ENCODE measurements at regions of chr20 and their contacts with region 1.

Region 1: GRCh38 chr20:23680146-23680545 is 8.7 kb downstream of the CST4 start:
- DNase-seq: no peak
- ATAC-seq: no peak
- H3K4me3 ChIP-seq: no peak overlapping the region
- H3K27ac ChIP-seq: no peak overlapping the region
- H3K4me1 ChIP-seq: no peaks in the 10 kb centered on the region
- H3K27me3 ChIP-seq: no peaks in the 10 kb centered on the region
- CTCF ChIP-seq: no peak
- POLR2A ChIP-seq: no peak

Region 2: DNA sequence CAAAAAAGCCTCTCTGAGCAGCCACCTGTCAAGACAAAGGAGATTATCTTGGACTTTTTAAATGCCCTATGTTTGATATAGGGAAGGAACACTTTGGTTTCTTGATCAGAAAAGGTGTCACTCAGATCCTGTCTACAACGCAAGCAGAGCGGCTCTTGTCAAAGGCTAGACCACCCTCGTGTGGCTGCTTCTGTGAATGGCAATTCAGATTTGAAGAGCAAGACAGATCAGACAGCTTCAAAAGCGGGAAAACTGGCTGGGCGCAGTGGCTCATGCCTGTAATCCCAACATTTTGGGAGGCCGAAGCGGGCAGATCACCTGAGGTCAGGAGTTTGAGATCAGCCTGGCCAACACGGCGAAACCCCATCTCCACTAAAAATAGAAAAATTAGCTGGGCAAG is 339.6 kb before region 1 on chr20:
- in situ Hi-C with region 1: no loop called
- intact Hi-C with region 1: no loop called
- DNase-seq: peak; percentile 39 to 63
- ATAC-seq: peak; percentile 84 to 87
- H3K4me3 ChIP-seq: no peak overlapping the region
- H3K27ac ChIP-seq: no peak overlapping the region
- H3K4me1 ChIP-seq: peaks cover 6% of the 10 kb centered on the region in 2 donors
- H3K27me3 ChIP-seq: no peaks in the 10 kb centered on the region
- CTCF ChIP-seq: peak; percentile 33 to 75 (median 74)
- POLR2A ChIP-seq: no peak

Region 3: DNA sequence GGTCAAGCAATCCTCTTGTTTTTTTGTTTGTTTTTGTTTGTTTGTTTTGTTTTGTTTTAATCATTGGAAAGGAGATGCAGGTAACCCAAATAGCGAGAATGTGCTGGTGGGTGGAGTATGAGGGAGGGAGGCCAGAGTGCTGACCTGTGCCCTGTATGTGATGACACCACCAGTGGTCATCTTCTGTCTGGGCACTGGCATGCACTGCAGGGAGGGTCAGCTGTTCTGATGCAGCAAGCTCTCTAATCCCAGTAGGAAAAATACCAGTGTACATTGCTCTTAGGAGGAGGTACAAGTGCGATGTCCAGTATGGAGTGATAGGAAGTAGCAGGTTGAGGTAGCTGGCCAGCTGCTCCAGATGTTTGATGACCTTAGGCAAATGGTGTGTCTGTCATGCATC is 73.4 kb after region 1 on chr20:
- in situ Hi-C with region 1: no loop called
- intact Hi-C with region 1: no loop called
- DNase-seq: no peak
- ATAC-seq: no peak
- H3K4me3 ChIP-seq: no peak overlapping the region
- H3K27ac ChIP-seq: no peak overlapping the region
- H3K4me1 ChIP-seq: no peaks in the 10 kb centered on the region
- H3K27me3 ChIP-seq: no peaks in the 10 kb centered on the region
- CTCF ChIP-seq: no peak
- POLR2A ChIP-seq: no peak

Region 4: DNA sequence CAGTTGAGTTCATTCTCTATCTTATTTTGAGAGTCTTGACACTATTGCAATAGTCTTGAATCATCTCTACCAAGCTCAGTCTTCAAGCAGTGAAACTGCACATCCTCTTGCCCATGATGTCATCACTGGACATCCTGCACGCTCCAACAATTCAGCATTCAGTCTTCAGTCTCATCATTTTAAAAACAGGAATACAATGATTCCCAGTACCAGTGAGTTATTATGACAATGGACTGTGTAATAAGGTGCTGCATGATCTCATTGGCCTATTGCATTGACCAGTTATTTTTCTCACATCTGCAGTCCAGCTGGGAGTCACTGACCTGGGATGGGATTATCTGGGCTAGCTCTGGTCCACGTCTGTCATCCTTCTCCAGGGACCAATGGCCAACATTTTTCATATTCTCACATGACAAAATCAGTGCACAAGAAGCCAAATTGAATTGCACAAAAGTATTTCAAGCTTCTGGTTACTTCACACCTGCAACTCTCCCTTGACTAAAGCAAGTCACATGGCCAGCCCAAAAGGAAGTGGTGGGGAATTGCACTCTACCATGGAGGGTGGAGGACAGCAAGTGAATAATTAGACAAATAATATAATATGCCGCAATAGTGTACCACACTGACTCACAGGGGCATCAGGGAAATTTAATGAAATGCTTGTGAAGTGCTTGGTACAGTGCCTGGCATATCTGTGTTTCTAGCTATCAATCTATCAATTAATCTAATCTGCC is 152.8 kb after region 1 on chr20:
- in situ Hi-C with region 1: no loop called
- intact Hi-C with region 1: no loop called
- DNase-seq: no peak
- ATAC-seq: no peak
- H3K4me3 ChIP-seq: no peak overlapping the region
- H3K27ac ChIP-seq: no peak overlapping the region
- H3K4me1 ChIP-seq: no peaks in the 10 kb centered on the region
- H3K27me3 ChIP-seq: no peaks in the 10 kb centered on the region
- CTCF ChIP-seq: no peak
- POLR2A ChIP-seq: no peak

Region 5: GRCh38 chr20:23970049-23970448 is 289.9 kb after region 1 on chr20:
- in situ Hi-C with region 1: loop called in 1 of 4 experiments (anchors 25 kb)
- intact Hi-C with region 1: no loop called
- DNase-seq: no peak
- ATAC-seq: no peak
- H3K4me3 ChIP-seq: no peak overlapping the region
- H3K27ac ChIP-seq: no peak overlapping the region
- H3K4me1 ChIP-seq: no peaks in the 10 kb centered on the region
- H3K27me3 ChIP-seq: no peaks in the 10 kb centered on the region
- CTCF ChIP-seq: no peak
- POLR2A ChIP-seq: no peak

Region 6: DNA sequence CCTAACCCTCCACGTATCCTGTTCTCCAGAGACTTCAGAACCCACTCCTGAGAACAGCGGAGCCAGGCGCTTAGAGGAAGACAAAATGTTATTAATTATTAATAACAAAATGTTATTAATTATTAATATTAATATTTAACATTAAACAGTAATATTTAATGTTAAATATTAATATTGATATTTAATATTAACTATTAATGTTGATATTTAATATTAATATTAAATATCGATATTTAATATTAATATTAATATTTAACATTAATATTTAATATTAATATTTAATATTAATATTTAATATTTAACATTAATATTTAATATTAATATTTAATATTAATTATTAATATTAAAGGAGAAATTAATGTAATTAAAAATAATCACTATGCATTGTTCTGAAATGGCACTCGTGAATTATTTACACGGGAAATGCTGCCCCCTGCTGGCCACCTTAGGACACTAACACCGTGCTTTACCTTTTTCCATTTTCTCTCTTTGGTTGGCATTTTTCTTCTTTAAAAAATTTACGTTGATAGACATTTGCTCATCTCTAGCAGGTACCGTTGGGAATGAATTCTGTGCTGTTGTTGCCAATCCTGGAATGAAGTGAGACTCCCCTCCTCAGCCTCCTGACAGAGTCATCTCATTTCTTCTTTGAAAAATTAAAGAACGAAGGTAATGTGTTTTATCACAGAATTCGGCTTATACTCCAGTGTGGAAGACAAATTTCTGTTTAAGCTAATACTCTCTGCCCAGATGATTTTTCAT is 315.9 kb after region 1 on chr20:
- in situ Hi-C with region 1: loop called in 2 of 4 experiments (anchors 10 kb)
- intact Hi-C with region 1: no loop called
- DNase-seq: no peak
- ATAC-seq: no peak
- H3K4me3 ChIP-seq: no peak overlapping the region
- H3K27ac ChIP-seq: no peak overlapping the region
- H3K4me1 ChIP-seq: no peaks in the 10 kb centered on the region
- H3K27me3 ChIP-seq: peaks cover 0 to 6% (median 0%) of the 10 kb centered on the region in 3 donors
- CTCF ChIP-seq: peak; percentile 40 to 84 (median 67)
- POLR2A ChIP-seq: no peak

Region 7: GRCh38 chr20:24001712-24002405 is 321.7 kb after region 1 on chr20:
- in situ Hi-C with region 1: loop called in 2 of 4 experiments (anchors 10 kb)
- intact Hi-C with region 1: no loop called
- DNase-seq: no peak
- ATAC-seq: no peak
- H3K4me3 ChIP-seq: no peak overlapping the region
- H3K27ac ChIP-seq: no peak overlapping the region
- H3K4me1 ChIP-seq: no peaks in the 10 kb centered on the region
- H3K27me3 ChIP-seq: peaks cover 0 to 6% (median 4%) of the 10 kb centered on the region in 3 donors
- CTCF ChIP-seq: no peak
- POLR2A ChIP-seq: no peak

Measured in gastrocnemius medialis (tissue), 4 donors.